Astrocyte of the cerebellum (primary cell): ENCODE measurements at regions of chr3 and their contacts with region 1.

Region 1: GRCh38 chr3:18302517-18302916 is 122.6 kb downstream of the SATB1 start:
- DNase-seq: no peak
- H3K4me3 ChIP-seq: no peak overlapping the region
- CTCF ChIP-seq: no peak

Region 2: DNA sequence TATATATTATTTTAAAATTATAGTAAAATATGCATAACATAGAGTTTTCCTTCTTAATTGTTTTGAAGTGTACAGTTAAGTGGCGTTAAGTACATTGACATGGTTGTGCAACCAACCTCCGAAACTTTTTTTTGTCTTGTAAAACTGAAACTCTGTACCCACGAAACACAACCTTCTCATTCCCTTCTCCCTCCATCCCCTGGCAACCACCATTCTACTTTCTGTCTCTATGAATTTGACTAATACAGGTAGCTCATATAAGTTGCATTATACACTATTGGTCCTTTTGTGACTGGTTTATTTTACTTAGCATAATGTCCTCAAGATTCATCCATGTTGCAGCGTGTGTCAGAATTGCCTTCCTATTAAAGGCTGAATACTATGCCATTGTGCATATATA is 56.8 kb before region 1 on chr3:
- in situ Hi-C with region 1: loop called (anchors 10 kb)
- DNase-seq: no peak
- H3K4me3 ChIP-seq: no peak overlapping the region
- CTCF ChIP-seq: no peak

Region 3: DNA sequence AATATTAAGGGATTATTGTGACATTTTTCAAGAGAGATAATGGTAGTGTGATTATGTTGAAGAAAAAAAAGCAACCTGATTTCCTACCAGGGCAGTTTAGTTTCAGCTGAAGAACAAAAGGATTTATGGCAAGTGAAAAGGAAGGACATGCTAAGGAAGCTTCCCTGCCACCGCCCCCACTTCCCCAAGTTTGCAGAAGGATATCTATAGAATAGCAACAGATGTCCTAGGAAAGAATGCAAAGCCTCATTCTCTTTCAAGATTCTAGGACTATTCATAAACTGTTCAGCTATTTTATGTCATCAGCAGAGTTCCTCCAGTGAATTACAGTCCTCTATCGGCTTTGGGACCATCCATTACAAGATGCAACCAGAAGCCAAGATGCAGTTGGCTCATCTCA is 38.2 kb before region 1 on chr3:
- in situ Hi-C with region 1: no loop called
- DNase-seq: no peak
- H3K4me3 ChIP-seq: no peak overlapping the region
- CTCF ChIP-seq: no peak